ENCODE measurements at regions of chr1 and their contacts with region 1.

Region 1: DNA sequence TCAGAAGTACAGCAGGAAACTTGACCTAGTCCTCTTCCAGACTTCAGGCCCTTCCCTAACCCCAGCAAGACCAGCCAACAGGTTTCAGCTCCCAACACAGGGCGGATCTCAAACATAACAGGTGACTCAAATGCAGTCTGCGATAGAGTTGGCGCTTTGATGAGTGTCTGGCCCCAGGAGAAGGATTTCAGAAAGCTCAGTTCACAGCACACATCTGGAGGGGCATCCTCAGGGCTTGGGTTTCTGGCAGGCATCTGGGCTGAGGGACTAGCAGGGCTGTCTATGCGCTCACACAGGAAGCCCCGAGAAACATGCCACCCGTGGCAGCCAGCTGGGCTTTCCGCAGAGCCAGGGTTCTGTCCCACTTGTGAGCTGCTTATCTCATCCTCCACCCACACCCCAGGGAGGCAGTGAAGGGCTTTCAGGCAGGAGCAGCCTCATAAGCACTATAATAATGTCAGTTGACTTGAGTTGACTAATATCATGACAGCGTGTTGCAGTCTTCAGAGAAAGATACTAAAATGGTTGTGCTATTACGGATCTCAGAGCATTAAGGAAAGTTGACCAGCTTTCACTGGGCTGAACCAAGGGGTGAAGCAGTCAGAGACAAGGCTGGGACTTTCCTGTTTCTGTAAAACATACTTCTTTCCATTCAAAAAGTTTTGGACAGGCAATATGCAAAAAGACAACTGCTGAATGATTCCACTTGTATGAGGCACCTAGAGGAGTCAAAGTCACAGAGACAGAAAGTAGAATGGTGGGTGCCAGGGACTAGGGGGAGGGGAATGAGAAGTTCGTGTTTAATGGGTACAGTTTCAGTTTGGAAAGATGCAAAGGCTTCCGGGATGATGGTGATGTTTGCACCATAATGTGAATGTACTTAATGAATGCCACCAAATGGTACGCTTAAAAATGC is 233.0 kb upstream of the IRF2BP2 start:
- DNase-seq: peak; percentile 81
- ATAC-seq: peak; percentile 73

Region 2: GRCh38 chr1:234499119-234499942 is 343.7 kb before region 1 on chr1:
- intact Hi-C with region 1: loop called (anchors 10 kb)
- DNase-seq: peak; percentile 96
- ATAC-seq: peak; percentile 98

Region 3: DNA sequence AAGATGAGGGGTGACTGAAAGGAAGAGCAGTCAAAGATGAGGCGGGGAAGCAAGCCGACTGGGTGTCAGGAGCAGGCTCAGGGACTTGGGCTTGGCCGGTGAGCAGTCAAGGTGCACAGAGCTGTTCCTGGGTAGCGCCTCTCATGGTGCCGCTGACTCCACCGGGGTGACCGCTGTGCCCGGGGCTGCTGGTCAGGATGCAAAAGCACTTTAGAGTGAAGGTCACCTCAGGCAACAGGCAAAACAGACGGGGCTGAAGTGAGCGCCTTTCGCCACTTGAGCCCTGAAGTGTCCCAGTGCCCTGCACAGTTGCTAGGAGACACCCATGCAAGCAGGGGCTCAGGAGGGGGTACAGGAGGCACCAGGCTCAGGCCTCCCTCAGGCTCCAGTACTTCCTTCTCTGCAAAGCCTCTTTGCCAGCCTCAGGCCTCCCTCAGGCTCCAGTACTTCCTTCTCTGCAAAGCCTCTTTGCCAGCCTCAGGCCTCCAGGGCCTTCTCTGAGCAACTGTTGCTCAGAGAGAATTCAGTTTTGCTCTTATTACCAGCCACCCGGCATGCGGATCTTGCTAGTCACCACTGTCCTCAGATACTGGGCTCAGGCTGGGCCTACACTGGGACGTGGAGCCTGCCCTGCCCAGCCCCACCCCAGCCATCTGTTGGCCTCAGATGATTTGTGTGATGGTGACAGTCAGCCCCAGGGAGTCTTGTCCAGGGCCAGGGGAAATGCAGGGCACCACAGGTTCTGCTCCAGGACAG is 133.3 kb before region 1 on chr1:
- intact Hi-C with region 1: no loop called
- DNase-seq: peak; percentile 70
- ATAC-seq: peak; percentile 88

Measured in Right ventricle myocardium superior (tissue), 1 donor.